Activated CD4-positive, alpha-beta T cell treated with anti-CD3 and anti-CD28 coated beads, Interleukin-2, amount 10 ng/mL, durations not matched to agents 7 days and 5 days (primary cell): ENCODE measurements at regions of chr14 and their contacts with region 1.

Region 1: DNA sequence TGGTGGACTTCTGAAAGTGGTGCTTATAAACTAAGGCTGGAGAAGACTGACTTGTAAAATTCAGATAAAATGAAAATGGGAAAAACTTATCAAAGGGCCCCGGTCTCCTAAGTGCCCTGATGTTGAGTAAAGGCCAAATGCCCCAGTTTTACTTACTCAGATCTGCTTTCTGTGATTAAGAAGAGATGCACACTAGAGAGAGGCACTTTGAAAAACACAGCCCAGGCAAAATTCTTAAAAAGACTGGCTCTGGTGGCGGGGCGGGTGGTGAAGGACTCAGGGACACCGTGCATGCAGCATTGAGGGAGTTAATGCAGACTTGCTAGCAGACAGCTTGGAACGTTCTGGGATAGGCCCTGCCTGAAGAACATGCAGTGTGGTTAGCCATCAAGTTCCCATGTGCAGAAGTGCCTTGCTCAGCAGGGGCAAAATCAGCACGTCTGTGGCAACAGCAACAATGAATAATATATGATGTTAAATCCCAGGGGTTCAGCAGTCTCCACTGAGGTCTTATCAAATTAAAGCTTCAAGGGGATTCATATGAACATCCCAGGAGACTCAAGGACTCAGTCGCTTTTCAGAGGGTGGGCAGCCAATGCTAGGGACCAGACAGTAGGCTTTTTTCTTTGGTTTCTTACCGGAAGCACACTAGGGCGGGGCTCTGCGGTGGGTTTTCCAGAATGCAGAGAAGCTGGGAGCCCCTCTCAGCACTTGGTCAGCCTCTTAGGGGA is 105.0 kb downstream of the DAD1 start:
- DNase-seq: no peak
- H3K4me3 Mint-ChIP-seq: peak overlapping the region; percentile 85
- H3K27ac Mint-ChIP-seq: peak overlapping the region; percentile 93
- H3K4me1 Mint-ChIP-seq: peaks cover 7% of the 10 kb centered on the region
- H3K27me3 Mint-ChIP-seq: no peaks in the 10 kb centered on the region

Region 2: GRCh38 chr14:22122227-22122818 is 361.7 kb before region 1 on chr14:
- CTCF ChIA-PET with region 1: no interaction called
- POLR2A ChIA-PET with region 1: interaction called, 12 read pairs
- DNase-seq: peak; percentile 38
- H3K4me3 Mint-ChIP-seq: peak overlapping the region; percentile 77
- H3K27ac Mint-ChIP-seq: peak overlapping the region; percentile 91
- H3K4me1 Mint-ChIP-seq: peaks cover 19% of the 10 kb centered on the region
- H3K27me3 Mint-ChIP-seq: no peaks in the 10 kb centered on the region

Region 3: GRCh38 chr14:22466491-22466890 is 17.5 kb before region 1 on chr14:
- CTCF ChIA-PET with region 1: no interaction called
- POLR2A ChIA-PET with region 1: no interaction called
- DNase-seq: no peak
- H3K4me3 Mint-ChIP-seq: no peak overlapping the region
- H3K27ac Mint-ChIP-seq: no peak overlapping the region
- H3K4me1 Mint-ChIP-seq: no peaks in the 10 kb centered on the region
- H3K27me3 Mint-ChIP-seq: no peaks in the 10 kb centered on the region